SK-N-SH (cell line): ENCODE measurements at regions of chr22 and their contacts with region 1.

Region 1: DNA sequence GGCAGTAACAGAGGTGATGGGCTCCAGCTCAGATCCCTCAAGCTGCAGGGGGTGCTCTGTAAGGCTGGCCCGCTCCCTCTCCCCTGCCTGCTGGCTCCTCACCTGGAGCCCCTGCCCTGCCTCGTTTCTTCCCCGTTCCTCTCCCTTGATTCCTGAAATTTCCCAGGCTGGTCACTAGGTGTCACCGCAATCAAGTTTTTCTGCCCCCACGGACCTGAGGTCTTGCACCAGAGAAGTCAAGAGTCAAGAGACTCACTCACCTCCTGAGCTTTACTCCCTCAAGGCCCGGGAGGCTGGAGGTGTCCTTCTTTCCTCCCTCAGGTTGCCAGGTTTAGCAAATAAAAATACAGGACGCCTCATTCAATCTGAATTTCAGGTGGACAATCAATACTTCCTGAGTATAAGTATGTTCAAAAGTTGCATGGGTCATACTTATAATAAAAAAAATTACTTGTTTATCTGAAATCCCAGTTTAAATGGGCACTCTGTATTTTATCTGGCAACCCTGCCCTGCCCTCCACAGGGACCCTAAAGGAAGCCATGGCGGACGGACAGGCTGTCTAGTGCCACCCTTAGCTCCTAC is 69.2 kb downstream of the SCUBE1 start:
- DNase-seq: peak; percentile 78
- H3K4me3 ChIP-seq: no peak overlapping the region; a peak in 1 of 4 replicates
- H3K27ac ChIP-seq: no peak overlapping the region
- H3K4me1 ChIP-seq: peaks cover 0 to 32% of the 10 kb centered on the region in 2 experiments; a peak in 1 of 4 replicates
- H3K27me3 ChIP-seq: no peaks in the 10 kb centered on the region
- CTCF ChIP-seq: peak; percentile 54
- EP300 ChIP-seq: no peak
- RAD21 ChIP-seq: peak; percentile 86

Region 2: GRCh38 chr22:43230971-43231723 is 42.8 kb before region 1 on chr22:
- CTCF ChIA-PET with region 1: interaction called, 69 read pairs
- POLR2A ChIA-PET with region 1: no interaction called
- DNase-seq: peak; percentile 79
- H3K4me3 ChIP-seq: peak overlapping the region in 1 of 2 experiments; percentile 54; a peak in 1 of 4 replicates
- H3K27ac ChIP-seq: peak overlapping the region in 1 of 2 experiments; percentile 25; a peak in 1 of 4 replicates
- H3K4me1 ChIP-seq: peaks cover 0 to 37% of the 10 kb centered on the region in 2 experiments; a peak in 1 of 4 replicates
- H3K27me3 ChIP-seq: no peaks in the 10 kb centered on the region
- CTCF ChIP-seq: peak; percentile 69
- EP300 ChIP-seq: no peak
- RAD21 ChIP-seq: peak; percentile 83

Region 3: GRCh38 chr22:43293655-43294392 is 19.8 kb after region 1 on chr22:
- CTCF ChIA-PET with region 1: interaction called, 28 read pairs
- POLR2A ChIA-PET with region 1: interaction called, 9 read pairs
- DNase-seq: no peak
- H3K4me3 ChIP-seq: no peak overlapping the region
- H3K27ac ChIP-seq: peak overlapping the region in 1 of 2 experiments; percentile 95; a peak in 2 of 4 replicates
- H3K4me1 ChIP-seq: peaks cover 0 to 81% of the 10 kb centered on the region in 2 experiments; a peak in 1 of 4 replicates
- H3K27me3 ChIP-seq: no peaks in the 10 kb centered on the region
- CTCF ChIP-seq: no peak
- EP300 ChIP-seq: no peak
- RAD21 ChIP-seq: no peak

Region 4: GRCh38 chr22:43300891-43301676 is 27.1 kb after region 1 on chr22:
- CTCF ChIA-PET with region 1: interaction called, 19 read pairs
- POLR2A ChIA-PET with region 1: no interaction called
- DNase-seq: no peak
- H3K4me3 ChIP-seq: no peak overlapping the region
- H3K27ac ChIP-seq: peak overlapping the region in 1 of 2 experiments; percentile 76; a peak in 2 of 4 replicates
- H3K4me1 ChIP-seq: peaks cover 0 to 85% of the 10 kb centered on the region in 2 experiments; a peak in 1 of 4 replicates
- H3K27me3 ChIP-seq: no peaks in the 10 kb centered on the region
- CTCF ChIP-seq: no peak
- EP300 ChIP-seq: no peak; a peak in 1 of 4 replicates
- RAD21 ChIP-seq: no peak

Region 5: GRCh38 chr22:43356881-43357280 is 82.9 kb after region 1 on chr22:
- CTCF ChIA-PET with region 1: interaction called, 13 read pairs
- POLR2A ChIA-PET with region 1: no interaction called
- DNase-seq: no peak
- H3K4me3 ChIP-seq: no peak overlapping the region
- H3K27ac ChIP-seq: no peak overlapping the region
- H3K4me1 ChIP-seq: no peaks in the 10 kb centered on the region
- H3K27me3 ChIP-seq: no peaks in the 10 kb centered on the region
- CTCF ChIP-seq: no peak
- EP300 ChIP-seq: no peak
- RAD21 ChIP-seq: no peak

Region 6: GRCh38 chr22:43385770-43386641 is 112.0 kb after region 1 on chr22:
- CTCF ChIA-PET with region 1: interaction called, 24 read pairs
- POLR2A ChIA-PET with region 1: no interaction called
- DNase-seq: peak; percentile 80
- H3K4me3 ChIP-seq: peak overlapping the region in 1 of 2 experiments; percentile 55; a peak in 2 of 4 replicates
- H3K27ac ChIP-seq: no peak overlapping the region
- H3K4me1 ChIP-seq: no peaks in the 10 kb centered on the region; a peak in 1 of 4 replicates
- H3K27me3 ChIP-seq: no peaks in the 10 kb centered on the region
- CTCF ChIP-seq: peak; percentile 64
- EP300 ChIP-seq: no peak
- RAD21 ChIP-seq: peak; percentile 90

Region 7: DNA sequence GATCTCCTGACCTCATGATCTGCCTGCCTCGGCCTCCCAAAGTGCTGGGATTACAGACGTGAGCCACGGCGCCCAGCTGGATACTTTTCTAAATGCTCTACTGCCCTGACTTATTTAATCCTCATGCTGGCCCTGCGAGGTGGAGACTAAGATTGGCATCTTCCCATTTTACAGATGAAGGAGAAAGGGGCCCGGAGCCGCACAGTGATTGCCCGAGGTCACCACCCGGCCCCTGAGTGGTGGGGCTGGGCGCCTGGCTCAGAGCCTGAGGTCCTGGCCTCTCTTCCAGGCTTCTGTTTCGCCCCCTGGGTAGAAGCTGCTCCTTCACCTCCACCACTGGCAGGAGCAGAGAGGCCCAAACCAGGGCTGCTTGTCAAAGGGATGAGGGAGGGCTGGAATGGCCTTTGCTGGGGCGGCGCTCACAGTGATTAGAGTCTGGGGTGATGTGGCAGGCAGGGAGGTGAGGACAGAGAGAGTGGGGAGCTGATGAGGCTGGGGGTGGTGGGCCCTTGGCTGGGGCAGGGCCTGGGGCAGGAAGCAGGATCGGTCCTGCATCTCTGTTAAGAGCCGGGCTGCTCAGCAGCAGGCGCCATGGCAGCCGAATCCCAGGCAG is 122.4 kb after region 1 on chr22:
- CTCF ChIA-PET with region 1: no interaction called
- POLR2A ChIA-PET with region 1: no interaction called
- DNase-seq: no peak
- H3K4me3 ChIP-seq: no peak overlapping the region
- H3K27ac ChIP-seq: no peak overlapping the region
- H3K4me1 ChIP-seq: no peaks in the 10 kb centered on the region
- H3K27me3 ChIP-seq: no peaks in the 10 kb centered on the region
- CTCF ChIP-seq: no peak
- EP300 ChIP-seq: no peak
- RAD21 ChIP-seq: no peak

Region 8: DNA sequence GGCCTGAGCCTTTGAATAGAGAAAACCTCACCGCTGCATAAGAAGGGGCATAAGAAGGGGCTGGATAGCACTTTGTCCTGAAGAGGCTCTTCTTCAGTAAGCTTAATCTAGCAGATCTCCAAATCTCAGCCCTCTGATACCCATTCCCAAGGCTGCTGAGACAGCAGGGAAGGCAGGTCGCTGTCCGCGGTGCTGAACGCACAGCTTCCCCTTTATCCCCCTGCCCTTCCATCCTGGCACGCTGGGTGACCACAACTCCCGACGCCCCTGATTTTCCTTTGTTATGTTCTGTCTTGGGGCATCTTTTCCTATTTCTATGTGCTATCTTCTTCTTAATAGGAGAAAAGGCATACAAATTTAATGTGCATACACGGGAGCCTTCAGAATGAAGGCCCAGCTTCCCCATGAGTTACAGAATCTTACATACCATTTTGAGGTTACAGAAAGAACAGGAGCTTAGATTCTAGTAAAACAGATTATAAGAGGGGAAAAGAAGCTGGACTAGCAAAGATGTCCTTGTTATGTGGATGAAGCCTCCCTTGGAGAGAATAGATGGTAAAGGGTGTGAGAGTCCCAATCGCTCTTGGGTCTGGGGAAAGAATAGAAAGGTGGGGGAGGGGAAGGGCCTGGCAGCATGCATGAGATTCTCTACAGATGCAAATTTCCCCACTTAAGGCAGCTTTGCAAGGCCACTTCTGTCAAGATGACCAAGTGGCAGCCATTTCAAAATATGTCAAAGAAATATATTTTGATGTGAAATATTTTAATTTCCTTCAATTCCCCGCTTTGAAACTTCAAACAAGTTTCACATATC is 594.1 kb after region 1 on chr22:
- CTCF ChIA-PET with region 1: no interaction called
- POLR2A ChIA-PET with region 1: no interaction called
- DNase-seq: no peak
- H3K4me3 ChIP-seq: no peak overlapping the region
- H3K27ac ChIP-seq: no peak overlapping the region
- H3K4me1 ChIP-seq: no peaks in the 10 kb centered on the region
- H3K27me3 ChIP-seq: no peaks in the 10 kb centered on the region
- CTCF ChIP-seq: no peak
- EP300 ChIP-seq: no peak
- RAD21 ChIP-seq: no peak